ENCODE measurements at regions of chr20 and their contacts with region 1.

Region 1: GRCh38 chr20:43749734-43750294 is 23.0 kb upstream of the GTSF1L start:
- DNase-seq: peak; percentile 77
- H3K4me3 Mint-ChIP-seq: no peak overlapping the region
- H3K27ac Mint-ChIP-seq: no peak overlapping the region
- H3K4me1 Mint-ChIP-seq: peaks cover 43% of the 10 kb centered on the region
- H3K27me3 Mint-ChIP-seq: no peaks in the 10 kb centered on the region

Region 2: GRCh38 chr20:43691928-43692524 is 57.8 kb before region 1 on chr20:
- CTCF ChIA-PET with region 1: no interaction called
- POLR2A ChIA-PET with region 1: no interaction called
- DNase-seq: peak; percentile 71
- H3K4me3 Mint-ChIP-seq: no peak overlapping the region
- H3K27ac Mint-ChIP-seq: no peak overlapping the region
- H3K4me1 Mint-ChIP-seq: peaks cover 3% of the 10 kb centered on the region
- H3K27me3 Mint-ChIP-seq: no peaks in the 10 kb centered on the region

Region 3: DNA sequence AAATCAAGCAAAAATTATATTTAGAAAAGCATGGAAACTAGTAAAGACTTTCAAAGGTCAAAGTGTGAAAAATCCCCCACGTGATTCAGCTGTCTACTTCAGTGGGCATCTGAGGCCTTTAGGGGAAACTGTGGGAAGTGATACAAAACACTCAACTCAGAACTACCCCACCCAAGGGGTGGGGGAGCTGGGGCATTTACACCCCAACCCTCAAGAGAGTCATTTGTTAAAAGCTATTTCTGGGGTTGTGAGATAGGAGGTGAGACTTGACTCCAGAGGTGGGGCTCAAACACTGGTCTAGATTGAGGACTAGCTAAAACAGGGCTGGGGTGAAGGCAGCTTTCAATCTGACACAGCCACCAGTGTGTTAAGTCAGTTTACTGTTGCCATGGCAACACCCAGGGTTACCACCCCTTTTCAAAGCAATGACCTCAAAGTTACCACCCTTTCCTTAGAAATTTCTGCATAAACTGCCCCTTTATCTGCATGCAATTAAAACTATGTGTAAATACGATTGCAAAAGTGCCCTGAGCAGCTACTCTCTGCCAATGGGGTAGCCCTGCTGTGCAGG is 13.1 kb before region 1 on chr20:
- CTCF ChIA-PET with region 1: interaction called, 23 read pairs
- POLR2A ChIA-PET with region 1: no interaction called
- DNase-seq: peak; percentile 27
- H3K4me3 Mint-ChIP-seq: no peak overlapping the region
- H3K27ac Mint-ChIP-seq: no peak overlapping the region
- H3K4me1 Mint-ChIP-seq: peaks cover 19% of the 10 kb centered on the region
- H3K27me3 Mint-ChIP-seq: no peaks in the 10 kb centered on the region

Region 4: GRCh38 chr20:43761386-43762340 is 11.8 kb after region 1 on chr20:
- CTCF ChIA-PET with region 1: interaction called, 11 read pairs
- POLR2A ChIA-PET with region 1: no interaction called
- DNase-seq: no peak
- H3K4me3 Mint-ChIP-seq: no peak overlapping the region
- H3K27ac Mint-ChIP-seq: no peak overlapping the region
- H3K4me1 Mint-ChIP-seq: no peaks in the 10 kb centered on the region
- H3K27me3 Mint-ChIP-seq: no peaks in the 10 kb centered on the region

Region 5: DNA sequence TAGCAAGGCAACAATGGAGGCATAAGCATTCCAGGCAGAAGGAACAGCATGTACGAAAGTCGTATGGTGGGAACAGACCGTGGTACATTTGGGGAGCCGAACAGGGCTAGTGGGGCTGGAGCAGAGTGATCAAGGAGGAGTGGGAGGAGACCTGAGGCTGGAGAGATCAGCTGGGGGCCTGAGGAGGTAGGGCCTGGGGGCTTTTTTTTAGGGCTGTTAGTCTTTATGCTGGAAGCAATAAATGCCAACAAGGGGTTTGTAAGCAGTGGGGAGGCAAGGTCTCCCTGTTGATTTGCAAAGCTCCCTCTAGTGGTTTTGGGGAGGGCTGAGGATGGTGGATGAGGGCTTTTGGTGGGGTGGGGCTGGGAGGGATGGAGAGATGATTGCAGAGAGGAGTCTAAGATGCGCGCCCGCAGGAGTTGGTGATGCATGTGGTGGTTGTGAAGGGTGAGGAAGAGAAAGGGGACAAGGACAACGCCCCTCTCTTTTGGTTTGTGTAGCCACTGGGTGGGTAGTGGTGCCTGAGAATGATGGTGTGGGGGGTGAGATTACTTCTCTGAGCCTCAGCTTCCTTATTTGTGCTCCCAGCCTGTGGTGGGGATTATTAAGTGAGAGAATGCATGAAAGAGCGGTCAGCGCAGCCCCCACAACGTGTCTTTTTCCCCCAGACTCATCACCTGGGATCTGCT is 90.7 kb after region 1 on chr20:
- CTCF ChIA-PET with region 1: interaction called, 15 read pairs
- POLR2A ChIA-PET with region 1: interaction called, 4 read pairs
- DNase-seq: peak; percentile 48
- H3K4me3 Mint-ChIP-seq: no peak overlapping the region
- H3K27ac Mint-ChIP-seq: peak overlapping the region; percentile 3
- H3K4me1 Mint-ChIP-seq: peaks cover 62% of the 10 kb centered on the region
- H3K27me3 Mint-ChIP-seq: no peaks in the 10 kb centered on the region

Region 6: DNA sequence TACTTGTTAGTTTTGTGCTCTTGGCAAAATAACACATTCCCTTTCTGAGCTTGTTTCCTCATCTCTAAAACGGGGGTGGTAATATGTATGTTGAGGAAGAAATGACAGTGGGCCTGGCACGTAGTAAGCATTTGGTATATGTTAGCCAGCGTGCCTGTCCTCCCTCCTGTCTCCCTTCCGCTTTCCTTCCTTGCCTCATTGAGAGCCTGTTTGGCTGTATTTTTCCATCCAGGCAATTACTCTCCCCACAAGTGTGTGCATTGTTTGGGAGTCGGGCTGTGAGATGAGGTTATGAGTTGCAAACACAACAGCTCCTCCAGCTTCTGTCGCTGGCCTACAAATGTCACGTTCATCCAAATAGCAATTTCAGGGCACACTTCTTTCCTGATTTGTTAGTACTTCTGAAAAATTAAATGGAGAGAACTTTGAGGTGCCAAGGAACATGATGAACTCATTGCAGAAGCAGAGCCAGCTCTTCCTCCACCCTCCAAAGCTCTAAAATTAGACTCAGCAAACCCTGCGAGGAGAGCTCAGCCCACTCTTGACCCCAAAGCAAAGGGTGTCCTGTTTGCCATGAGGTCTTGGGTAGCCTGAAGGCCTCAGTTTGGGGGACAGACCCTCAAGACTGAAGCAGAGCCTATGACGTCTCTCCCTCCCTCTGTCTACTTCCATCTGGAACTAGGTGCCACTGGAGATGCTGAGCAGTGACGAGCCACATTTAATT is 114.2 kb after region 1 on chr20:
- CTCF ChIA-PET with region 1: interaction called, 13 read pairs
- POLR2A ChIA-PET with region 1: no interaction called
- DNase-seq: no peak
- H3K4me3 Mint-ChIP-seq: no peak overlapping the region
- H3K27ac Mint-ChIP-seq: no peak overlapping the region
- H3K4me1 Mint-ChIP-seq: no peaks in the 10 kb centered on the region
- H3K27me3 Mint-ChIP-seq: peaks cover 2% of the 10 kb centered on the region

Measured in activated CD4-positive, alpha-beta T cell treated with anti-CD3 and anti-CD28 coated beads, Interleukin-2, amount 10 ng/mL, durations not matched to agents 7 days and 5 days (primary cell).